OCI-LY7 (cell line): ENCODE measurements at regions of chr20 and their contacts with region 1.

Region 1: GRCh38 chr20:34876162-34877001 is at the start of gene ACSS2:
- DNase-seq: peak; percentile 91
- H3K4me3 ChIP-seq: peak within 1 kb of the TSS; percentile 66
- H3K27ac ChIP-seq: no peak within 1 kb of the TSS
- H3K4me1 ChIP-seq: peaks cover 43% of the 10 kb centered on the region
- CTCF ChIP-seq: no peak
- total RNA-seq, gene ACSS2: 21.0 and 21.4 TPM in 2 replicates

Region 2: GRCh38 chr20:34955232-34956040 is 79.1 kb after region 1 on chr20 and contains the starts of genes GSS and MYH7B:
- CTCF ChIA-PET with region 1: interaction called, 14 read pairs
- POLR2A ChIA-PET with region 1: interaction called, 10 read pairs
- intact Hi-C with region 1: loop called (anchors 1 kb)
- DNase-seq: peak; percentile 97
- H3K4me3 ChIP-seq: peak within 1 kb of the TSS; percentile 78
- H3K27ac ChIP-seq: peak within 1 kb of the TSS; percentile 61
- H3K4me1 ChIP-seq: peaks cover 79% of the 10 kb centered on the region
- CTCF ChIP-seq: peak; percentile 73
- total RNA-seq, gene GSS: 91.4 and 105 TPM in 2 replicates
- total RNA-seq, gene MYH7B: 0.08 and 0.79 TPM in 2 replicates

Region 3: DNA sequence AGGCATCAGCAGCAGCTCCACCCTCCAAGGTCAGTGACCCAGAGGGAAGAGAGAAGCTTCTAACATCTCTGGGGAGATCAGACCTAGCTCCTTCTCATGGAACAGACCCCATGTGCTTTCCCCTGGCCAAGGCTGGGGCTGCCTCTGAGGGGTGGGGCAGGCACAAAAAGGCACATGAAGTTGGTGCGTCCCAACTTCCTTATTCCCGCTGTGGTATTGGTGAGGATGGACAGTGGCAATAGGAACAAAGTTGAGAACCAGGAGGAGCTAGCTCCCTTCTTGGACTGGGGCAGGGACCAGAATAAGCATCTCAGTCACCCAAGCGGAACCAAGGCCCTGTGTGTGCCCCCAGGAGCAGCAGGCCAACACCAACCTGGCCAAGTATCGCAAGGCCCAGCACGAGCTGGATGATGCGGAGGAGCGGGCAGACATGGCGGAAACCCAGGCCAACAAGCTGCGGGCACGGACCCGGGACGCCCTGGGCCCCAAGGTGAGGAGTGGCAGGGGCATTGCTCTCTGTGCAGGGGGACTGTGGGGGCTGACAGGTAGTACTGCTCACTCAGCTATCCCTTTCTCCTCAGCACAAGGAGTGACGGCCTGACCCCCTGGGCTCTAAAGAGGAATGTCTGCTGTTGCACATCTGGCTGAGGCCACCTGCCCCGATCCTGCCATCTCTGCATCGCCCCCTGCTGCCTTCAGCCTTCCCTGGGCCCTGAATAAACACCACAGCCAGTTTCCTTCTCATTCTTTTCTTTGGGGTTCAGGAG is 125.4 kb after region 1 on chr20:
- CTCF ChIA-PET with region 1: interaction called, 3 read pairs
- POLR2A ChIA-PET with region 1: no interaction called
- intact Hi-C with region 1: loop called (anchors 1 kb)
- DNase-seq: peak; percentile 31
- H3K4me3 ChIP-seq: no peak overlapping the region
- H3K27ac ChIP-seq: no peak overlapping the region
- H3K4me1 ChIP-seq: peaks cover 13% of the 10 kb centered on the region
- CTCF ChIP-seq: peak; percentile 70

Region 4: GRCh38 chr20:35092524-35093266 is 216.3 kb after region 1 on chr20 and contains the start of gene TRPC4AP:
- CTCF ChIA-PET with region 1: no interaction called
- POLR2A ChIA-PET with region 1: no interaction called
- intact Hi-C with region 1: loop called (anchors 1 kb)
- DNase-seq: peak; percentile 92
- H3K4me3 ChIP-seq: peak within 1 kb of the TSS; percentile 100
- H3K27ac ChIP-seq: peak within 1 kb of the TSS; percentile 20
- H3K4me1 ChIP-seq: peaks cover 18% of the 10 kb centered on the region
- CTCF ChIP-seq: peak; percentile 88
- total RNA-seq, gene TRPC4AP: 25.5 and 31.9 TPM in 2 replicates

Region 5: GRCh38 chr20:35277531-35278395 is 401.4 kb after region 1 on chr20 and contains the start of gene MMP24OS:
- CTCF ChIA-PET with region 1: no interaction called
- POLR2A ChIA-PET with region 1: no interaction called
- intact Hi-C with region 1: loop called (anchors 10 kb)
- DNase-seq: peak; percentile 93
- H3K4me3 ChIP-seq: peak within 1 kb of the TSS; percentile 77
- H3K27ac ChIP-seq: peak within 1 kb of the TSS; percentile 72
- H3K4me1 ChIP-seq: peaks cover 16% of the 10 kb centered on the region
- CTCF ChIP-seq: peak; percentile 52
- total RNA-seq, gene MMP24OS: 13.2 and 14.8 TPM in 2 replicates

Region 6: GRCh38 chr20:35541783-35542588 is 665.6 kb after region 1 on chr20 and contains the start of gene ERGIC3:
- CTCF ChIA-PET with region 1: no interaction called
- POLR2A ChIA-PET with region 1: interaction called, 10 read pairs
- intact Hi-C with region 1: no loop called
- DNase-seq: peak; percentile 97
- H3K4me3 ChIP-seq: peak within 1 kb of the TSS; percentile 84
- H3K27ac ChIP-seq: peak within 1 kb of the TSS; percentile 43
- H3K4me1 ChIP-seq: peaks cover 25% of the 10 kb centered on the region
- CTCF ChIP-seq: no peak
- total RNA-seq, gene ERGIC3: 171 and 178 TPM in 2 replicates